Dendritic cell treated with granulocyte-macrophage colony-stimulating factor and Interleukin-4, amounts not matched to agents 40 ng/mL and 50 ng/mL, for 4 days (primary cell): ENCODE measurements at regions of chr3 and their contacts with region 1.

Region 1: DNA sequence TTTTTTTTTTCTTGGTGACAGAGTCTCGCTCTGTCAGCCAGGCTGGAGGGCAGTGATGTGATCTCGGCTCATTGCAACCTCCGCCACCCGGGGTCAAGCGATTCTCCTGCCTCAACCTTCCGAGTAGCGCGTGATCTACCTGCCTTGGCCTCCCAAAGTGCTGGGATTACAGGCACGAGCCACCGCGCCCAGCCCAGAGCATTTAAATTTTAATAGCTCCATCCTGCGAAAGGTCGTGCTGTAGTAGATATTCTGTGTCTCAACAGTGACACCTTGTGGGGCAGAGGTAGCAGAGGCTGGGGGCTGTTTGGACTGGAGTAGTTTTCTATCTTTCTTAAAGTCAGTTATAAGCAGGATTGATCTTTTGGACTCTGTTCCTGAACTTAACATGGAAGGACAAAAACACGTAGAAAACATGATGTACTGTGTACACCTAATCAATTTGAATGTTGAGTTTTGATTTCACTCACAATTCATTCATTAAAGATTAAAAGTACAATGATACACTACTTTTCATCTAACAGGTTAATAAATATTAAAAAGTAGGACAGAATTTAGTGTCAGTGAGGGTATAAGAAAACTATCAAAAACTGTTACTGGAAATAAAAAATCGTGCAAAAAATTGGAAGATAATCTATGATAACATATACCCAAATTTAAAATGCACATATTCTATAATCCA is 11.0 kb upstream of the PDCD6IP start:
- H3K4me3 Mint-ChIP-seq: peak overlapping the region; percentile 34
- H3K27ac Mint-ChIP-seq: no peak overlapping the region
- H3K4me1 Mint-ChIP-seq: peaks cover 17% of the 10 kb centered on the region
- H3K27me3 Mint-ChIP-seq: no peaks in the 10 kb centered on the region

Region 2: DNA sequence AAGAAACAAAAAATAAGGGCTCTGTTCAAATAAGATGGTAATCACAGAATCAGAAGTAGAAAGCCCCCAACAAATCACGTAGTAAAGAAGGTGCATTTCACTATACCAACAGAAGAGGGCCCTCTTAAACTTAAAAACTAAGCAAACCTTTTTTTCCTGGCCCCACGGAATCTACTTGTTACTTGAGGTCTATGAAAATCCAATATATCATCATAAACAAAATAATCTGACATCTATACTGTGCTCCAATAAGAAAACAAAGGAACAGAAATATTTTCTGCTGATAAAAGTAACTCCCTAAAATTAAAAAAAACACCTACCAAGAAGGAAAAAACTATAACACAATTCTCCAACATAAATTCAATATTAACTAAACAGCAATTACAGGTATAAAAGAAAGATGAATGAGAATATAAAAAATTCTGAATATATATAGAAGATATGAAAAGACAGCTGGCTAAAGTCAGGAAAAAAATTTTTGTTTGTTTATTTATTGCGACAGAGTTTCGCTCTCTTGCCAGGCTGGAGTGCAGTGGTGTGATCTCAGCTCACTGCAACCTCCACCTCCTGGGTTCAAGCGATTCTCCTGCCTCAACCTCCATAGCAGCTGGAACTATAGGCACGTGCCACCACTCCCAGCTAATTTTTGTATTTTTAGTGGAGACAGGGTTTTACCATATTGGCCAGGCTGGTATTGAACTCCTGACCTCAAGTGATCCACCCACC is 151.2 kb before region 1 on chr3:
- intact Hi-C with region 1: loop called (anchors 1 kb)
- H3K4me3 Mint-ChIP-seq: no peak overlapping the region
- H3K27ac Mint-ChIP-seq: no peak overlapping the region
- H3K4me1 Mint-ChIP-seq: no peaks in the 10 kb centered on the region
- H3K27me3 Mint-ChIP-seq: no peaks in the 10 kb centered on the region

Region 3: DNA sequence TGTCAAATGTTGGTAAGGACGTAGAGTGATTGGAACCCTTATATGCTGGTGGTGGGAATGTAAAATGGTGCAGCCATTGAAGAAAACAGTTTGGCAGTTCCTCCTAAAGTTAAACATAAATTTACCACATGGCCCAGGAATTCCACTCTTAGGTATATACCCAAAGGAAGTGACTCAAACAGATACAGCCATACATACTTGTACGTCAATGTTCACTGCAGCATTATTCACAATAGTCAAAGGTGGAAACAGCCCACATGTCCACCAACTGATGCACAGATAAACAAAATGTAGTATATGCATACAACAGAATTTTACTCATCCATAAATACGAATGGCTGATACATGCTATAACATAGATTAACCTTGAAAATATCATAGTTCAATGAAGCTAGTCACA is 82.6 kb before region 1 on chr3:
- intact Hi-C with region 1: no loop called
- H3K4me3 Mint-ChIP-seq: no peak overlapping the region
- H3K27ac Mint-ChIP-seq: no peak overlapping the region
- H3K4me1 Mint-ChIP-seq: peaks cover 14% of the 10 kb centered on the region
- H3K27me3 Mint-ChIP-seq: no peaks in the 10 kb centered on the region

Region 4: DNA sequence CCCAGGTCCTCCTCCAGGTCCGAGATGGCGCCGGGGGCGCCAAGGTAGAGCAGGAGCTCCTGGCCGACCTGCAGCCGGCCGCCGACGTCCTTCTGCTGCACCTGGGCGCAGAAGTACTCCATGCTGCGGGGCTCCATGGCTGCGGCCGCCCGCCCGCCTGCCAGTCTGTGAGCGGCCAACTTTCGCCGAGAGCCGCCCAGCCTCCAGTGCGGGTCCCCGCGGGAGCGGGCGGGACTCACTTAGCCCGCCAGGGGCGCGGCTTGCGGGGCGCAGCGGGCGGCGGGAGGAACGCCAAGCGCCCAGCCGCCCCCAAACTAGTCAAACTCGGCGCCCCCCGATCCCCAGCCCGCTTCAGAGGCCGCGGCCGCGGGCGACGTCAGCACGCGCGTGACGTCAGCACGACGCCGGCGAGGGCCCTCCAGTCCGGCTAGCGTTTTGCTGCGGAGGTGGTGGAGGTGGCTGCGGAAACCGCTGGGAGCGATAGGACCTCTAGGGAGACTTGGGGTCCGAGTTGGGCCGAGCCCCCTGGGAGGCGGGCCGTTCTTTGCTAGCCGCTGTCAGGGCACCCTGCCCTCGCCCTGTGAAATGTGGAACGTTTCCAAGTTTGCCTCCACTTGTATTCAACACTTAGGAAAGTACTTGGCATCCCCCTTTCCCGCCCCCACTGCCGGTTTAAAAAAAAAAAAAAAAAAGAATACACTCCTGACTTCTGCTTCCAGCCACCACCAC is 69.4 kb before region 1 on chr3 and contains the start of gene CLASP2:
- intact Hi-C with region 1: loop called (anchors 5 kb)
- H3K4me3 Mint-ChIP-seq: peak within 1 kb of the TSS; percentile 97
- H3K27ac Mint-ChIP-seq: no peak within 1 kb of the TSS
- H3K4me1 Mint-ChIP-seq: peaks cover 6% of the 10 kb centered on the region
- H3K27me3 Mint-ChIP-seq: no peaks in the 10 kb centered on the region

Region 5: DNA sequence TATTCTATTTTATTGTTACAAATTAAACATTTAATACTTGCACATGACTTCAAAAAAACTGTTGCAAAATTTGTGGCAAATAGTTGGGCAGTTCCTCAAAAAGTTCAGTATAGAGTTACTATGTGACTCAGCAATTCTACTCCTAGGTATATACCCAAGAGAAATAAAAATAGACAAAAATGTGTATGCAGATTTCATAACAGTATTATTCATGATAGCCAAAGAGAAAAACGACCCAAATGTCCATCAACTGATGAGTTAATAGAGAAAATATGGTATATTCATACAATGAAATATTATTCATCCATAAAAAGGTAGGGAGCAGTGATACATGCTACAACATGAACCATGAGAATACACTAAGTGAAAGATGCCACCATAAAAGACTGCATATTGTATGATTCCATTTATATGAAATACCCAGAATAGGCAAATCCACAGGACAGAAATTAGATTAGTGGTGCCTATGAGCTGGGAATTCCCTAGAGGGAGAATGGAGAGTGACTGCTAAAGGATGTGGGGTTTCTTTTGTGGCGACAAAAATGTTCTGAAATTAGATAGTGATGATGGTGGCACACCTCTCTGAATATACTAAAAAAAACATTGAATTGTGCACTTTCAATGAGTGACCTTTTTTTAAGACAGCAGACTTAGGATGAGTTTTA is 37.8 kb before region 1 on chr3:
- intact Hi-C with region 1: no loop called
- H3K4me3 Mint-ChIP-seq: no peak overlapping the region
- H3K27ac Mint-ChIP-seq: no peak overlapping the region
- H3K4me1 Mint-ChIP-seq: peaks cover 36% of the 10 kb centered on the region
- H3K27me3 Mint-ChIP-seq: no peaks in the 10 kb centered on the region